Calu3 (cell line): ENCODE measurements at regions of chr2 and their contacts with region 1.

Region 1: DNA sequence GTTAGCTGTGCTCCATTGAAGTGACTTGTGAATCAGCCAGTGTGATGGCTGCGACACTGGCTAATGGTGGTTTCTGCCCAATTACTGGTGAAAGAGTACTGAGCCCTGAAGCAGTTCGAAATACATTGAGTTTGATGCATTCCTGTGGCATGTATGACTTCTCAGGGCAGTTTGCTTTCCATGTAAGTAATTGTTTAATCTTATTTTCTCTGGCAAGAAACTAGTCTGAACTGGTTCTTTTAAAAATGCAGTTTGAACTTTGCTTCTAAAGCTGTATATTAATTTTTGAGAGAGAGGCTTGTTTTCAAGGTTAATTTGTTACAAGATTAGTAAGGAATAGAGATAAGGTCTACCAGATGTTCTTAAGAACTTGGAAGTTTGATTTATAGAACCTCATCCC is 46.7 kb downstream of the GLS start:
- DNase-seq: peak; percentile 43
- H3K4me3 Mint-ChIP-seq: no peak overlapping the region
- H3K27ac Mint-ChIP-seq: peak overlapping the region; percentile 23
- H3K4me1 Mint-ChIP-seq: peaks cover 38% of the 10 kb centered on the region
- H3K27me3 Mint-ChIP-seq: no peaks in the 10 kb centered on the region
- CTCF ChIP-seq: no peak

Region 2: GRCh38 chr2:190869721-190870120 is 57.6 kb before region 1 on chr2:
- CTCF ChIA-PET with region 1: no interaction called
- intact Hi-C with region 1: no loop called
- DNase-seq: no peak
- H3K4me3 Mint-ChIP-seq: no peak overlapping the region
- H3K27ac Mint-ChIP-seq: no peak overlapping the region
- H3K4me1 Mint-ChIP-seq: peaks cover 16% of the 10 kb centered on the region
- H3K27me3 Mint-ChIP-seq: no peaks in the 10 kb centered on the region
- CTCF ChIP-seq: no peak

Region 3: DNA sequence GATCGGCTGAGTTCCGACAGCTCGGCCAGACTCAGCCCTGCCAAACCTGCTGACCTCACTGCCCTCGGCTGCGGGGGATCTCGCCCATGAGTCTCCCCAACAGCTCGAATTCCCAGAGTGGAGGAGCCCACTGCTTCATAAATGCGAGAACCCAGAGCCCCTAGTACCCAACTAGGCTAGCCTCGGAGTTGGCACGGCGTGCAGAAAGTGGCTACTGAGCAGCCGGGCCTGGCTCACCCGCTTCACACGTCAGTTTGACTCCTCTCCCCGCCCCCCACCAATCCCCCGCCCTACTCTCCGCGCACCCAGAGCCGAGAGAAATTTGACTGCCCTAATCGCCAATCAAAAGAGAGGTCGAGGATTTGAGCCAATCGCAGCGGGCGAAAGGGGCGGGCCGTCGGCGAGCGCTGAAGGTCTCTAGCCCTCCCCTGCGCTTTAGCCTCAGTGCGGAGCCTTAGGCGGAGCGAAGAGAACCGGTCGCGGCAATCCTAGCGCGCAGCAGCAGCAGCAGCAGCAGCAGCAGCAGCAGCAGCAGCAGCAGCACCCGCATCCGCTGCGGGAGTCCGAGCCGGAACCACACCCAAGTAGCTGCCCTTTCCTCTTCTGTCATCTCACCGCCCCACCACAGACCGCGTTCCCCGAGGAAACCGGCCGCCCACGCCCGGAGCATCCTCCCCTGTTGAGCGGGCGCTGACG is 46.8 kb before region 1 on chr2 and contains the start of gene GLS:
- CTCF ChIA-PET with region 1: no interaction called
- intact Hi-C with region 1: loop called (anchors 2 kb)
- DNase-seq: peak; percentile 96
- H3K4me3 Mint-ChIP-seq: peak within 1 kb of the TSS; percentile 97
- H3K27ac Mint-ChIP-seq: peak within 1 kb of the TSS; percentile 100
- H3K4me1 Mint-ChIP-seq: peaks cover 19% of the 10 kb centered on the region
- H3K27me3 Mint-ChIP-seq: no peaks in the 10 kb centered on the region
- CTCF ChIP-seq: no peak
- total RNA-seq, gene GLS: 110 and 115 TPM in 2 replicates

Region 4: GRCh38 chr2:190947711-190948251 is 20.5 kb after region 1 on chr2:
- CTCF ChIA-PET with region 1: no interaction called
- intact Hi-C with region 1: no loop called
- DNase-seq: peak; percentile 43
- H3K4me3 Mint-ChIP-seq: peak overlapping the region; percentile 25
- H3K27ac Mint-ChIP-seq: no peak overlapping the region
- H3K4me1 Mint-ChIP-seq: peaks cover 8% of the 10 kb centered on the region
- H3K27me3 Mint-ChIP-seq: no peaks in the 10 kb centered on the region
- CTCF ChIP-seq: no peak